ENCODE measurements at regions of chr20 and their contacts with region 1.

Region 1: GRCh38 chr20:57089691-57090150 is 176.7 kb downstream of the BMP7 start:
- DNase-seq: peak; percentile 82
- H3K4me3 Mint-ChIP-seq: no peak overlapping the region
- H3K27ac Mint-ChIP-seq: no peak overlapping the region
- H3K4me1 Mint-ChIP-seq: peaks cover 11% of the 10 kb centered on the region
- H3K27me3 Mint-ChIP-seq: peaks cover 9% of the 10 kb centered on the region

Region 2: GRCh38 chr20:57102566-57103451 is 13.1 kb after region 1 on chr20:
- CTCF ChIA-PET with region 1: interaction called, 16 read pairs
- intact Hi-C with region 1: no loop called
- DNase-seq: no peak
- H3K4me3 Mint-ChIP-seq: no peak overlapping the region
- H3K27ac Mint-ChIP-seq: no peak overlapping the region
- H3K4me1 Mint-ChIP-seq: no peaks in the 10 kb centered on the region
- H3K27me3 Mint-ChIP-seq: peaks cover 12% of the 10 kb centered on the region

Region 3: GRCh38 chr20:57332102-57333089 is 242.7 kb after region 1 on chr20:
- CTCF ChIA-PET with region 1: interaction called, 4 read pairs
- intact Hi-C with region 1: loop called (anchors 1 kb)
- DNase-seq: no peak
- H3K4me3 Mint-ChIP-seq: no peak overlapping the region
- H3K27ac Mint-ChIP-seq: no peak overlapping the region
- H3K4me1 Mint-ChIP-seq: no peaks in the 10 kb centered on the region
- H3K27me3 Mint-ChIP-seq: peaks cover 22% of the 10 kb centered on the region

Measured in activated naive CD4-positive, alpha-beta T cell treated with anti-CD3 and anti-CD28 coated beads for 36 hours (primary cell).